ENCODE measurements at regions of chr6 and their contacts with region 1.

Region 1: GRCh38 chr6:17808609-17809008 is 101.9 kb upstream of the NUP153 start:
- DNase-seq: no peak
- ATAC-seq: no peak
- H3K4me3 Mint-ChIP-seq: no peak overlapping the region
- H3K27ac Mint-ChIP-seq: no peak overlapping the region
- H3K4me1 Mint-ChIP-seq: no peaks in the 10 kb centered on the region
- H3K27me3 Mint-ChIP-seq: no peaks in the 10 kb centered on the region
- CTCF ChIP-seq: no peak

Region 2: DNA sequence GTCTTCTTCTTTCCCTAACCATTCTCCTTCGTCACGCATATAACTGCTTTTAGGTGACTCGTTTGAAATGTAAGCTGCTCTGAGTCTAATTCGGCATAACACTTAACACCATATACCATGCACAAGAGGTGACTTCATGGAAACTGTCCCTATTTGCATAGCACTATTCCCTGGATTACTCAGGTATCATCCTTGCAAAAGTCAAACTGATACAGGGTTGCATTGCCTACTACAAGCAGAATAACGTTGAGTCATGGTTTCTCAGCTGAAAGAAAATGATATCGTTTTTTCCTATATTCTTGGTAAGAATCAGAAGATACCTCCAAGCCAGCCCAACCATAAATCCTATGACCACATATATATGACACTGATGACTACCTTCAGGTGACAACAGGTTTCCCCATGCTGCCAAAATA is 1274.9 kb before region 1 on chr6:
- CTCF ChIA-PET with region 1: no interaction called
- POLR2A ChIA-PET with region 1: no interaction called
- intact Hi-C with region 1: no loop called
- DNase-seq: no peak
- ATAC-seq: no peak
- H3K4me3 Mint-ChIP-seq: no peak overlapping the region
- H3K27ac Mint-ChIP-seq: no peak overlapping the region
- H3K4me1 Mint-ChIP-seq: peaks cover 7% of the 10 kb centered on the region
- H3K27me3 Mint-ChIP-seq: no peaks in the 10 kb centered on the region
- CTCF ChIP-seq: no peak

Region 3: GRCh38 chr6:17505062-17505476 is 303.5 kb before region 1 on chr6:
- CTCF ChIA-PET with region 1: no interaction called
- POLR2A ChIA-PET with region 1: no interaction called
- intact Hi-C with region 1: loop called (anchors 10 kb)
- DNase-seq: no peak
- ATAC-seq: no peak
- H3K4me3 Mint-ChIP-seq: no peak overlapping the region
- H3K27ac Mint-ChIP-seq: no peak overlapping the region
- H3K4me1 Mint-ChIP-seq: no peaks in the 10 kb centered on the region
- H3K27me3 Mint-ChIP-seq: no peaks in the 10 kb centered on the region
- CTCF ChIP-seq: no peak

Region 4: DNA sequence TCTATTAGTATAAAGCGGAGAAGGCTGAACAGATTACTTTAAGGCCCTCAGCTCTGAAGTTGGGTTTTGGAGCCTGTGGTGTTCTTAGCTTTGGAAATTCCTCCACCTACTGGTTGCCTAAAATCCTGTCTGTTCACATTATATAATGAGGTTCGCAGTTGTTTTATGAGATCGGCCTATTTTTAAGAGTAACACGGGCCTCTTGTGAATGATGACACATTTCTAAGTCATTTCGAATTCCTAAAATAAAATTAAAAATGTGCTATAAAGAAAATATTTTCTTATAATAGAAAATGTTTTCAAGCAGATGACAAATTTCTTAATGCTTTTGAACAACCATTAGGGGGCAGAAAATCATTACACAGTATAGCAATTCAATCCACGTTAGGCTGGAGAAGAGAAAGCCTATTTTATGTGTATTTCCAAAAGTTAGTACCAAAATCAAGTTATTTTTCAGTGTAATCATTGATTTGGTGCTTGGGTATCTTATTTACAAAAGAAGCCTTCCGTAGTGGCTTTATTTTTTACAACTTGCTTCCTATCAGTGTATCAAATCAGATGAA is 224.3 kb before region 1 on chr6:
- CTCF ChIA-PET with region 1: interaction called, 18 read pairs
- POLR2A ChIA-PET with region 1: no interaction called
- intact Hi-C with region 1: loop called (anchors 1 kb)
- DNase-seq: no peak
- ATAC-seq: peak; percentile 52
- H3K4me3 Mint-ChIP-seq: no peak overlapping the region
- H3K27ac Mint-ChIP-seq: peak overlapping the region; percentile 19
- H3K4me1 Mint-ChIP-seq: peaks cover 3% of the 10 kb centered on the region
- H3K27me3 Mint-ChIP-seq: peaks cover 2% of the 10 kb centered on the region
- CTCF ChIP-seq: peak; percentile 83

Region 5: GRCh38 chr6:17666646-17667045 is 142.0 kb before region 1 on chr6:
- CTCF ChIA-PET with region 1: no interaction called
- POLR2A ChIA-PET with region 1: no interaction called
- intact Hi-C with region 1: loop called (anchors 10 kb)
- DNase-seq: no peak
- ATAC-seq: no peak
- H3K4me3 Mint-ChIP-seq: no peak overlapping the region
- H3K27ac Mint-ChIP-seq: no peak overlapping the region
- H3K4me1 Mint-ChIP-seq: no peaks in the 10 kb centered on the region
- H3K27me3 Mint-ChIP-seq: no peaks in the 10 kb centered on the region
- CTCF ChIP-seq: no peak

Measured in activated B cell treated with CpG ODN at 0.5 μM for 24 hours (primary cell).